AG04450 (cell line): ENCODE measurements at regions of chr6 and their contacts with region 1.

Region 1: DNA sequence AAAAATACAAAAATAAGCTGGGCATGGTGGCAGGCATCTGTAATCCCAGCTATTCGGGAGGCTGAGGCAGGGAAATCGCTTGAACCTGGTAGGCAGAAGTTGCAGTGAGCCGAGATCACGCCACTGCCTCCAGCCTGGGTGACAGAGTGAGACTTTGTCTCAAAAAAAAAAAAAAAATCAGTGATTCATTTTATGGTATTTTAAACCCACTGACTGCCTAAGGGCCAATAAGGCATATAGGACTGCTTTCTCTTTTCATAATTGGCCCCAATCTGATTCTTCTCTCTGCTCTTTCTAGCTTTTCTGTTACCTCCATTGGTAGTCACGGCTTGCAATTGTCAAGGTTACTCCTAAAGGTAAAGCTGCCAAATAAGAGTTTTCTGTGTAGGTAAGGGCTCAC is 60.2 kb upstream of the ADGRF1 start:
- DNase-seq: no peak
- H3K4me3 ChIP-seq: no peak overlapping the region
- H3K27ac ChIP-seq: no peak overlapping the region
- H3K27me3 ChIP-seq: peaks cover 3% of the 10 kb centered on the region
- CTCF ChIP-seq: no peak

Region 2: DNA sequence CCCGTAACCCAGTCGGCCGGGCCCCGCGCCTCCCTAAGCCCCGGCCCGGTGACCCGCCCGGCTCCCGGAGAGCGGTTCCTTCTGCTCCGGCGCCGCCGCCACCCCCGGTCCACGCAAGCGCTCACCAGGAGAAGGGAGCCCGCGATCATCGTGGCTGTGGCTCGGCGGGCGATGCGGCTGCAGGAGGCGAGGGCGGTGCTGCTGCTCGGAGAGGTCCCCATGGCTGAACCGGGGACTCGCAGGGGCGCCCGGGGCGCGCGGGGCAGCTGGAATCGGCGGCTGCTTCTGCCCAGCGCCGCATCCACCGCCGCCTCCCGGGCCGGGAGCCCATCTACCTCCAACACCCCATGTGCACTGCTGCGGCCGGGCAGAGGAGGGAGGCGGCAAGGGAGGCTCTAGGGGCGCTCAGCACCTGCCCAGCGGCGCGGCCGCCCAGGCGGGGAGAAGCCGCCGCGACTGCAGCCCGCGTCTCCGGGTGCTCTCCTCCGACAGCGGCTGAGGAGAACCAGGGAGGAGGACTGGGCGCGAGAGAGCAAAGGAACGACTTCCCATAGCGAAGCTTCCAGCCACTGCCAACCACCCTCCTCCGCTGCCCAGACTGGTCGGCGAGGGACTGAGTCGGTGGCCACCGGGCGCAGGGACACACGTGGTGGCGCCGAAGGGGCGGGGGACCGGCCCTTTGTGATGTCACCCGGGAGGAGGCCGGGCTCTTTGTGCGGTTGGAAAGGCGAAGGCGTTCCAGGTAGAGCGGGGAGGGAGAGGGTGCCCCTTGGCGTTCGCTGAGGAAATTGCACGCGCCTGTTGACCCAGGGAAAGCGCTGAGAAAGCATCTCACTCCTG is 207.2 kb after region 1 on chr6 and contains the start of gene TNFRSF21:
- CTCF ChIA-PET with region 1: interaction called, 210 read pairs
- POLR2A ChIA-PET with region 1: interaction called, 3 read pairs
- DNase-seq: peak; percentile 68
- H3K4me3 ChIP-seq: peak within 1 kb of the TSS; percentile 95
- H3K27ac ChIP-seq: no peak within 1 kb of the TSS
- H3K27me3 ChIP-seq: peaks cover 20% of the 10 kb centered on the region
- CTCF ChIP-seq: peak; percentile 98
- polyA plus RNA-seq, gene TNFRSF21: 21.7 and 23.8 TPM in 2 replicates